HCT116 (cell line): ENCODE measurements at regions of chr2 and their contacts with region 1.

Region 1: GRCh38 chr2:58448065-58448507 is 207.0 kb upstream of the FANCL start:
- DNase-seq: peak; percentile 88
- ATAC-seq: peak; percentile 100
- H3K4me3 ChIP-seq: no peak overlapping the region
- H3K27ac ChIP-seq: no peak overlapping the region
- H3K4me1 ChIP-seq: peaks cover 0 to 9% of the 10 kb centered on the region in 2 experiments; a peak in 1 of 4 replicates
- H3K27me3 ChIP-seq: no peaks in the 10 kb centered on the region
- CTCF ChIP-seq: peak; percentile 69 to 98 (median 80)
- POLR2A ChIP-seq: no peak
- RAD21 ChIP-seq: peak; percentile 97

Region 2: DNA sequence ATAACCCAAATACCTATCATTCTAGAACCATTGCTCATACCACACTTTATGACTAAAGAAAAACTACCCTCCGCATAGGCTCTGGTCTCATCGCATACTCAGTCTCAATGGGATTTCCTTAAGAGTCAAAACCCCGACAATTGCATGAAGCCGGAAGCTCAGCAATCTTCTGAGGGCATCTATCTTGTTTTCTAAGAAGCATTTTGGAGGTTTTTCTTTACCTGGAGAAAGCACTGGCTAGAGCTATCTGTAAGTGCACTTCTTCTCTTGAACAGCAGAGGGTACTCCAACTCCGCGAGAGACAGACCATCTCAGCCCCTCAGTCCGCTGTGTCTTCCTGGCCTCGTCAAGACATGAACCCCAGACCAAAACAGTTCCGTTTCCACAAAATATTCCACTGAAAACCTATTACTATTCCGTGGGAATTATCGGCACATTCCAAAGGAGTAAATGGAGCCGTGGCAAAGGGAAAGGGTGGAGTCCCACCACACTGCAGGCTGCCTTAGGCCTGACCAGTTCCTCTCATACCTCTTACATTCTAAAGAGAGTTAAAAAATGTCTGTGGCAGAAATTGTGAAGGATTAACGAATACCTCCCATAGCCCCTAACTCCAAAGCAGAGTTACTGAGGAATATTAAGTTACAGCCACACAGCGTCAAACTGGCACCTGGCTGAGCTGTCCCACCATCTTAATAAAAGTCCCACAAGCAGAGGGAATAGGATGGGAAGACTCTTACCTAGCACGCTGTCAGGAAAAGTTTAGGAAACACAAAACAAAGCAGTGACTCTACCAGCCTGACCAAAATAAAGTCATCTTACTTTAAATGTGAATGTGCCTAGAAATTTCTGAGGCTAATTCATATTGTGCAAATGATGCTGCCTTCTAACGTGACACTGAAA is 727.1 kb before region 1 on chr2:
- CTCF ChIA-PET with region 1: interaction called, 11 read pairs
- POLR2A ChIA-PET with region 1: no interaction called
- RAD21 ChIA-PET with region 1: interaction called, 3 to 5 read pairs
- intact Hi-C with region 1: loop called (anchors 5 kb)
- DNase-seq: peak; percentile 48
- ATAC-seq: peak; percentile 99
- H3K4me3 ChIP-seq: peak overlapping the region in 1 of 2 experiments; percentile 20; a peak in 2 of 4 replicates
- H3K27ac ChIP-seq: no peak overlapping the region
- H3K4me1 ChIP-seq: peaks cover 0 to 11% of the 10 kb centered on the region in 2 experiments; a peak in 2 of 4 replicates
- H3K27me3 ChIP-seq: no peaks in the 10 kb centered on the region
- CTCF ChIP-seq: peak; percentile 56 to 90 (median 89); a peak in 5 of 6 replicates
- POLR2A ChIP-seq: no peak
- RAD21 ChIP-seq: peak; percentile 87

Region 3: DNA sequence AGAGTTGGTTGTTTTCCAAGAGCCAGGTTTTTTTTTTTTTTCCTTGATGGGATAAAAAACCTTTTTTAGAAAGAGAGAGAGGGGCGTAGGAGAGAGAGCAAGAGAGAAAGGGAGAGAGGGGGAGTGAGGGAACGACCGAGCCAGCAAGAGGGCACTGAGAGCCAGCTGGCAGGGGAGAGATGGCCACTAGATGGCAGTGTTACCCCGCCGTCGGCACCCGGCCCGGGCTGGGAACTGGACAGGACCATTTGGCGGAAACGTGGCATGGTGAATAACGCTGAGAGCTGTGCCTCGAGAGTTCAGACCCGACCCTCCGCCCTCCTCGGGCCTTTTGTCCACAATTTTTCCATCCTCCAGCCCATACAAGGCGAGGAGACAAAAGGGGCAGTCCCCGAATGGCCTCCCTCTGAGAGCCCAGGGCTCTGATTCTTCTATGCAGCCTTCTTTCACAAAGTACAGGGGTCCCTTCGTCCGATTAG is 688.2 kb before region 1 on chr2:
- CTCF ChIA-PET with region 1: interaction called, 13 read pairs
- POLR2A ChIA-PET with region 1: interaction called, 3 read pairs
- RAD21 ChIA-PET with region 1: interaction called, 3 to 7 read pairs
- intact Hi-C with region 1: loop called (anchors 1 kb)
- DNase-seq: peak; percentile 57
- ATAC-seq: peak; percentile 99
- H3K4me3 ChIP-seq: peak overlapping the region in 1 of 2 experiments; percentile 28; a peak in 2 of 4 replicates
- H3K27ac ChIP-seq: no peak overlapping the region
- H3K4me1 ChIP-seq: peaks cover 0 to 8% of the 10 kb centered on the region in 2 experiments; a peak in 2 of 4 replicates
- H3K27me3 ChIP-seq: no peaks in the 10 kb centered on the region
- CTCF ChIP-seq: peak; percentile 75 to 92 (median 87)
- POLR2A ChIP-seq: no peak
- RAD21 ChIP-seq: peak; percentile 96

Region 4: DNA sequence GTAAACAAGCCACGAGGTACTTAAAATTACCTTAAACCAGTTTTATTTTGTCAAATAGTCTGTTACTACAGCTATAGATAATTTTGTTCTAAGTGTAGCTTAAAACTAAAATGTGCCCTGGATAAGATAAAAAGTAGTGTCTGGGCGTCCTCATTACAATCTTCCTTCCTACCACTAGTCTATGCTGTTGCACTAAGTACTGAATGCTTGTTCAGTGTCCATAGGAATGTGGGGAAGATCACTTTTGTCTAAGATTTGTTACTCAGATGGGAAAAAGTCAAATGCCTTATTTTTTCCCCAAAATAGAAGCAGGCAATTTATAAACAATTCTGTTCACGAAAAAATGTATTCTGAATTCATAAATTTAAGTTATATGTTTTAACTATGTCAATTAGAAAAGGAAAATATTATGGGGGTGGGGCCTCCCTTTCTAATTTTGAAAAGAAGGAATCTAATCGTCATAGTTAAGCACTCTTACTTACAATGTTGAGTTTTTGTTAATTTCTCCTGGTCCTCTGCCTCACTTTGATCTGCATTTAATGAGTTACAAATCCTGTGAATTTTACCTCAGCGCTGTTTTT is 541.8 kb before region 1 on chr2:
- CTCF ChIA-PET with region 1: interaction called, 38 read pairs
- POLR2A ChIA-PET with region 1: no interaction called
- RAD21 ChIA-PET with region 1: interaction called, 7 to 13 read pairs
- intact Hi-C with region 1: loop called (anchors 1 kb)
- DNase-seq: no peak
- ATAC-seq: peak; percentile 98
- H3K4me3 ChIP-seq: no peak overlapping the region
- H3K27ac ChIP-seq: no peak overlapping the region
- H3K4me1 ChIP-seq: no peaks in the 10 kb centered on the region
- H3K27me3 ChIP-seq: no peaks in the 10 kb centered on the region
- CTCF ChIP-seq: peak; percentile 81 to 92 (median 84)
- POLR2A ChIP-seq: no peak
- RAD21 ChIP-seq: peak; percentile 95

Region 5: DNA sequence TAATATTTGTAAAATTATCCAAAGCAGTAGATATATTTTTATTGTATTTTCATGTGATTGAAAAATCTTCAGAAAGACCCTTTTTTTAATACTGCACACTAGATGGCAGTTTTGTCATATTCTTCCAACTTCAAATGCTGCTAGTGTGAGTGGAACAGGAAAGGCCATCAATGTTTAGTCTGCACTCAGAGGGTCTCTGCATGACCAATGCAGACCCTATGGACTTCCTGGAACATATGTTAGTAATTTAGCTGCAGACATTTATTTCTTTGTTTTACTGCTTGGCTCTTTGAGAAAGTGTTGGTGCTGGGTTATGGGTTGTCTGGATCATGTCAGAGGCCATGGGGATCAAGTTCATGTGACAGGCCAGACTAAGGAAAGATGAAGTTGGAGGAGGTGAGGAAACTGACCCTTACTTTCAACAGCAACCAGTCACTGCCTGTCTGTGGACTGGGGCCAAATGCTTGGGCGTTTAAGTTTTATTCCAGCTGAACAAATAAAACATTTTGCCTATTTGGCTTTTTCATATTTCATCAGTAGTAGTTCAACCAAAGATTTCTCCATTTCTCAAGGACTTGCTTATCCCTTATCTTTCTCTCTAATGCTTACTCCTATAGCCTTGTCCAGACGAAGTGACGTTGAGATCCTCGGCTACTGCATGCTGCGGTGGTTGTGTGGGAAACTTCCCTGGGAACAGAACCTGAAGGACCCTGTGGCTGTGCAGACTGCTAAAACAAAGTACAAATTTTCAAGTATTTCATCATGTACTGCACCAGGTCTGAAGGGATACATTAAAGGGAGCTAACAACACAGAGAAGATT is 316.7 kb before region 1 on chr2:
- CTCF ChIA-PET with region 1: interaction called, 7 read pairs
- POLR2A ChIA-PET with region 1: no interaction called
- RAD21 ChIA-PET with region 1: no interaction called
- intact Hi-C with region 1: loop called (anchors 5 kb)
- DNase-seq: no peak
- ATAC-seq: no peak
- H3K4me3 ChIP-seq: no peak overlapping the region
- H3K27ac ChIP-seq: no peak overlapping the region
- H3K4me1 ChIP-seq: peaks cover 0 to 3% of the 10 kb centered on the region in 2 experiments; a peak in 1 of 4 replicates
- H3K27me3 ChIP-seq: no peaks in the 10 kb centered on the region
- CTCF ChIP-seq: peak in 2 of 3 experiments; percentile 31 to 36; a peak in 2 of 6 replicates
- POLR2A ChIP-seq: no peak
- RAD21 ChIP-seq: peak; percentile 65

Region 6: DNA sequence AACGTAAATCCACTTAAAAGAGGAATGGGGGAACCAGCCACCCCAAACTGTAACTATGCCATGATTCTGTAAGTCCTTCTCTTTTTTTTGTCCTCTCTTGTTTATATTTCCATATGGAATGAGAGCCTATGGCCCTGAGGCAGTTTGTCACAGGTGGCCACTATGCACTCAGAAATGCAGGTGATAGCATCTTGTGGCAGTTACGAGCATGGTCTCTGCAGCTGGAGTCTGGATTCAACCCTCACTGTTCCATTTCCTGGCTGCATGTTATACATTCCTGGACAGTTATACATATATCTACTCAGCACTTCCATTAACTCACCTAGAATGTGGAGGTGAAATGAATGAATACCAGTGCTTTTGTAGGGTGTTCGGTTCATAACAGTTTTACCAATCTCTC is 84.6 kb after region 1 on chr2:
- CTCF ChIA-PET with region 1: no interaction called
- POLR2A ChIA-PET with region 1: no interaction called
- RAD21 ChIA-PET with region 1: no interaction called
- intact Hi-C with region 1: no loop called
- DNase-seq: no peak
- ATAC-seq: no peak
- H3K4me3 ChIP-seq: no peak overlapping the region
- H3K27ac ChIP-seq: no peak overlapping the region
- H3K4me1 ChIP-seq: no peaks in the 10 kb centered on the region
- H3K27me3 ChIP-seq: no peaks in the 10 kb centered on the region
- CTCF ChIP-seq: no peak
- POLR2A ChIP-seq: no peak
- RAD21 ChIP-seq: no peak

Region 7: GRCh38 chr2:58553937-58554336 is 105.9 kb after region 1 on chr2:
- CTCF ChIA-PET with region 1: interaction called, 13 read pairs
- POLR2A ChIA-PET with region 1: no interaction called
- RAD21 ChIA-PET with region 1: interaction called in 1 of 2 experiments, 4 read pairs
- intact Hi-C with region 1: no loop called
- DNase-seq: peak; percentile 7
- ATAC-seq: peak; percentile 72
- H3K4me3 ChIP-seq: no peak overlapping the region
- H3K27ac ChIP-seq: no peak overlapping the region
- H3K4me1 ChIP-seq: no peaks in the 10 kb centered on the region
- H3K27me3 ChIP-seq: no peaks in the 10 kb centered on the region
- CTCF ChIP-seq: peak; percentile 35 to 56 (median 53); a peak in 5 of 6 replicates
- POLR2A ChIP-seq: no peak
- RAD21 ChIP-seq: peak; percentile 54